ENCODE measurements at regions of chr5 and their contacts with region 1.

Region 1: DNA sequence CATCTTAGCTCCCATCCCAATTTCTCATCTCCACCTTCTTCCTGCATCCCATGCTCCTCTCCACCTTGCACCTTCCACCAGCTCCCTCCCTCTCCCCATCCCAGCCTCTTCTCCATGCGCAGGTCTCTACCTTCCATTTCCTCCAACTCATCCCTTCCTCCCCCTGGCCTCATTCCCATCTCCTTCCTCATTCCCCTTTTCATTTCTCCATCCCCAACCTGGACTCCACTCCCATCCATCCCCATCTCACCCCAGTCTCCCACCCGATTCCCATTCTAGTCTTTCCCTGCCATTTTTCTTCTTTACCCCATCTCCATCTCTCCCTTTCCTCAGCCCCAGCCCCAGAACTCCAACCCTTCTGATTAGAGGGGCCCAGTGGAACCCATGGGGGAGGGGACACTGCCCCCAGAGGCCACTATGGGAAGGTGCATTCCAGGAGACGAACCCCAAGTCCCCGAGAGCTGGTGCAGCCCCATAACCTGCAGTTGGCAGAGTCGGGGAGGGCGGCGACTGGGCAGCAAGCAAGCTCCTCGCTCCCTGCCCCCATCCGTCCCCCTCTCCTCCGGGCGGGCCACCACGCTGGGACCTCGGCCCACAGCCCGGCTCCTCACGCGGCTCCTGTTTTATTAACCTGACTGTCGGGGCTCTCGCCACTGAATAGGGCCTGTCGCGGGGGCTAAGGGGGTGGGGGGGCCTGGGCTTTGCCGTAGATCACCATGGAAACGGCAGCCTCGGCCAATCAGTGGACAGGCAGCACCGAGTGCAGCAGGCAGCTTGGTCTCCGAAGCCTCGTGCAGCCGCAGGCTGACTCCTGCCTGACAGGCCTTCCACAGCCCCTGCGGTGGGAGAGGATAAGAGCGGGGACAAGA is 66.7 kb downstream of the PCDH1 start:
- DNase-seq: peak in 1 of 2 experiments; percentile 89
- H3K4me3 ChIP-seq: peak overlapping the region in 2 of 4 experiments; percentile 21 to 53; a peak in 5 of 8 replicates
- H3K27ac ChIP-seq: no peak overlapping the region
- H3K4me1 ChIP-seq: peaks cover 33 to 51% (median 34%) of the 10 kb centered on the region in 4 experiments
- H3K27me3 ChIP-seq: no peaks in the 10 kb centered on the region; a peak in 1 of 7 replicates
- CTCF ChIP-seq: peak in 2 of 3 experiments; percentile 80 to 91; a peak in 3 of 4 replicates
- EP300 ChIP-seq: peak in 1 of 2 experiments; percentile 52; a peak in 1 of 3 replicates
- POLR2A ChIP-seq: no peak
- RAD21 ChIP-seq: peak; percentile 66 to 74

Region 2: GRCh38 chr5:141713616-141714309 is 97.8 kb before region 1 on chr5:
- CTCF ChIA-PET with region 1: interaction called, 25 read pairs
- POLR2A ChIA-PET with region 1: interaction called, 5 read pairs
- DNase-seq: no peak
- H3K4me3 ChIP-seq: no peak overlapping the region
- H3K27ac ChIP-seq: no peak overlapping the region
- H3K4me1 ChIP-seq: peaks cover 3 to 20% (median 11%) of the 10 kb centered on the region in 4 experiments
- H3K27me3 ChIP-seq: no peaks in the 10 kb centered on the region
- CTCF ChIP-seq: no peak
- EP300 ChIP-seq: no peak
- POLR2A ChIP-seq: no peak
- RAD21 ChIP-seq: no peak

Region 3: DNA sequence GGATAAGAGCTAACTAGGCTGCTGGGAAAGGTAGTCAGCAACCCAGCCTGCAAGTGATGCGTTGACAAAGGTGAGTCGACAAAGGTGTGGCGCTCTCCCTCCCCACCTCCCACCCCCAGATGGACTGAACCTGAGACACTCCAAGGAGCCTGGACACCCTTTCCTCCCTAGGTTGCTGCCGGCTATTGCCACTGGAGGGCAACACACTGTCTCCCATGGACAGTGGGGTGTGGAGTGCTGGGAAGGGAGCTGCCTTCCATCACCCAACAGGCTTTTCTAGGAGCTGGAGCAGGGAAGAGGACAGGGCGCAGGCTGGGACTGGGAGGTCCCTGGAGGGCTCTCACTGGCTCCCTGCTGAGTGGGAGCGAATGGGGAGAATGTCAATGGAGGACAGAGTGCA is 54.1 kb before region 1 on chr5:
- CTCF ChIA-PET with region 1: interaction called, 179 read pairs
- POLR2A ChIA-PET with region 1: interaction called, 9 read pairs
- DNase-seq: peak in 1 of 2 experiments; percentile 29
- H3K4me3 ChIP-seq: no peak overlapping the region
- H3K27ac ChIP-seq: no peak overlapping the region
- H3K4me1 ChIP-seq: peaks cover 17 to 30% (median 26%) of the 10 kb centered on the region in 4 experiments
- H3K27me3 ChIP-seq: peaks cover 9 to 22% (median 18%) of the 10 kb centered on the region in 4 experiments
- CTCF ChIP-seq: peak in 2 of 3 experiments; percentile 78 to 79; a peak in 3 of 4 replicates
- EP300 ChIP-seq: no peak
- POLR2A ChIP-seq: no peak
- RAD21 ChIP-seq: peak; percentile 76 to 86

Region 4: DNA sequence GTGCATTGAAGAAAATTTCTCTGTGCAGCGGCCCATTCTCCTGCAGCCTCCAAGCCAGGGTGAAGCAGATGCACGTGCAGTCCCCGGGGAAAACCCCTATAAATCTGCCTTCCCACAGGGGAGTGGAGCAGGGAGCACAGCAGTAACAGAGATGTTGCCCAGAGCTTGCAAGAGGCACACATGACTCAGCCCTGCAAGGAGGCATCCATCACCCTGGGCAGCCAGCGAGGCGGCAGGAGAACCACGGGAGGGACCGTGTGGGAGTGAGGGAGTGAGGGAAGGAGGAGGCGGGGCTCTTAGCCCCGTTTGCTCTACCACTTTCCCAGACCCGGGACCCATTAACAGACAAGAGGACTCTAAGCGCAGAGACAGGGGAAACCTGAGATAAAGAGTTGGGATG is 33.3 kb before region 1 on chr5:
- CTCF ChIA-PET with region 1: interaction called, 210 read pairs
- POLR2A ChIA-PET with region 1: interaction called, 4 read pairs
- DNase-seq: no peak
- H3K4me3 ChIP-seq: no peak overlapping the region
- H3K27ac ChIP-seq: no peak overlapping the region
- H3K4me1 ChIP-seq: peaks cover 0 to 10% (median 6%) of the 10 kb centered on the region in 4 experiments; a peak in 6 of 7 replicates
- H3K27me3 ChIP-seq: no peaks in the 10 kb centered on the region
- CTCF ChIP-seq: no peak
- EP300 ChIP-seq: no peak
- POLR2A ChIP-seq: no peak
- RAD21 ChIP-seq: no peak

Region 5: GRCh38 chr5:141825791-141826560 is 14.5 kb after region 1 on chr5:
- CTCF ChIA-PET with region 1: interaction called, 232 read pairs
- POLR2A ChIA-PET with region 1: interaction called, 27 read pairs
- DNase-seq: no peak
- H3K4me3 ChIP-seq: no peak overlapping the region
- H3K27ac ChIP-seq: no peak overlapping the region
- H3K4me1 ChIP-seq: peaks cover 10 to 26% (median 16%) of the 10 kb centered on the region in 4 experiments
- H3K27me3 ChIP-seq: no peaks in the 10 kb centered on the region
- CTCF ChIP-seq: peak; percentile 56 to 70 (median 65)
- EP300 ChIP-seq: no peak
- POLR2A ChIP-seq: no peak
- RAD21 ChIP-seq: peak; percentile 64 to 74

Region 6: DNA sequence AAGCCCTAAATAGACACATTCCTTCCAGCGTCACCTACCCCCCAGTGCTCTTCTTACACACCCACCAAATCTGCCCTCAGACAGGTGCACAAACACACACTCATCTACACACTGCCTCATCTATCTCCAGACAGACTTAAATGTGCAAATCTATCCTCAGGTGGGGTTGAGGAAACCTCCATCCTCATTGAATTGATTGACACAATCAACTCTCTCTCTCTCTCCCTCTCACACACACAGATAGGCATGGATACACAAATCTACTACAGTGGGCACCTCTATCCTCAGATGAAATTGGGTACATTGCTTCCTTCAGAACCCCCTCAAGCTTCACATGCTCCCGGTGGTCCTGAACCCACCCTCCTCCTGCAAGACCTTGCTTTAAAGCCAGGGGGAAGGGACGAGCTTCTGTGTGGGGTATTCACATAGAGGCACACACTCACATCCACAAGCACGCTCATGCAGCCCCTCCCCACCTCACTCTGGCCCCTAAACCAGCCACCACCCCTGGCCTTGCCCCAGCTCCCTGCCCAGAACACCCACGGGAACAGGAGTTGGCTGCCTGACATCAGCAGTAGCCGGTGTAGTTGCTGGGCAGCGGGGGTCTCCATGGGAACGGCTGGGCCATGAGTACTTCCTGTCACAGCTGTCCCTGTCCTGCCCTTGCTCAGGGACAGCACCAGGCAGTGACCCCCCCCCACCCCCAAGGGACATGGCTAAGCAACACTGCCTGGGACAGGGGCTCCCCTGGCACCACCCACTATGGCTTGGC is 43.9 kb after region 1 on chr5:
- CTCF ChIA-PET with region 1: interaction called, 94 read pairs
- POLR2A ChIA-PET with region 1: interaction called, 8 read pairs
- DNase-seq: no peak
- H3K4me3 ChIP-seq: no peak overlapping the region
- H3K27ac ChIP-seq: 0 out of 2 replicates have a peak overlapping the region, but pooled peaks have one; percentile 10
- H3K4me1 ChIP-seq: peaks cover 20 to 48% (median 37%) of the 10 kb centered on the region in 4 experiments
- H3K27me3 ChIP-seq: no peaks in the 10 kb centered on the region
- CTCF ChIP-seq: no peak
- EP300 ChIP-seq: no peak
- POLR2A ChIP-seq: no peak
- RAD21 ChIP-seq: no peak

Region 7: DNA sequence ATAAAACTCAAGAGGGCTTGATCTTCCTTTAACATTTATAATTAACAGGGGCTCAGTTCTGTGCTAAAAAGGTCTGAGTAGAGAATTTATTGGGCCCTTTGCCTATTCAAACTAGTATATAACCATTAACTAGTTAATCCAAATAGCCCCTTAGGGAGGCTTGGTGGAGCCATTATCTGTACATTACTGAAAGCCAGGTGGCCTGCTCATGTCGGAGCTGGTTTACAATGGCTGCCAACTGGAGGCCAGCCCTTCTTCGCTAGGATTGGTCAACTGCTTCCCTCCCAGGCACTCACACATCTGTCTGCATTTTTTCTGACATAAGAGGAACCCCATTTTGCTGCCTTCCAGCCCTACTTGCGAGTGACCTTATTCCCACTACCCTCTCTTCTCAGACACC is 266.7 kb after region 1 on chr5:
- CTCF ChIA-PET with region 1: no interaction called
- POLR2A ChIA-PET with region 1: no interaction called
- DNase-seq: no peak
- H3K4me3 ChIP-seq: no peak overlapping the region
- H3K27ac ChIP-seq: no peak overlapping the region
- H3K4me1 ChIP-seq: no peaks in the 10 kb centered on the region
- H3K27me3 ChIP-seq: no peaks in the 10 kb centered on the region
- CTCF ChIP-seq: no peak
- EP300 ChIP-seq: no peak
- POLR2A ChIP-seq: no peak
- RAD21 ChIP-seq: no peak

Measured in H1 (cell line).